Endothelial cell of umbilical vein (primary cell): ENCODE measurements at regions of chr13 and their contacts with region 1.

Region 1: DNA sequence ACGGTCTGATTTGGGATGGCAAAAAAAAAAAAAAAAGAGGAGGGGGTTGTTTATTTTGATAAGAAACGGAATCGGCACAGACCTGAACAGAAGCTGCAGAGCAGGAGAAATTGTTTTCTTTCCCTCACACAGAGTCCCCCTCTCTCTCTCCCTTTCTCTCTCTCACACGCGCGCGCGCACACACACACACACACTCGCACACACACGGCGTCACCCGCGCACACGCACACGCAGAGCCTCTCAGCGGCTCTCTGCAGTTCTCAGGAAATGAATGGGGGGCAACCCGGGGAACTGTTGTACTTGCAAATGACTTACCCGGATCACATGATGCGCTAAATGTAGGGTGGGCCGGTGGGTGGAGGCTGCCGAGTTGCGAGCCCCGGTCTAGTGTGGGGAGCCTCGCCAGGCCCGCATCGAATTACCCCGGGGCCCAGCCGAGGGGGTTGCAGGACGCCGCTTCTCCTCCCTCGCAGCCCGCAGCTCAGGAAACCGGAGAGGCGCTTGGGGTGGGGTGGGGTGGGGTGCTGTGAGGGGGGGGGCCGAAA is 475 bp downstream of the KLF12 start:
- DNase-seq: peak; percentile 90
- H3K4me3 ChIP-seq: peak overlapping the region; percentile 74 to 92 (median 91)
- H3K27ac ChIP-seq: peak overlapping the region; percentile 64
- H3K4me1 ChIP-seq: peaks cover 32% of the 10 kb centered on the region
- H3K27me3 ChIP-seq: no peaks in the 10 kb centered on the region
- CTCF ChIP-seq: no peak
- POLR2A ChIP-seq: no peak

Region 2: GRCh38 chr13:73835138-73835721 is 298.5 kb before region 1 on chr13:
- CTCF ChIA-PET with region 1: interaction called, 4 read pairs
- POLR2A ChIA-PET with region 1: no interaction called
- dilution Hi-C with region 1: no loop called
- intact Hi-C with region 1: loop called (anchors 2 kb)
- DNase-seq: peak; percentile 55
- H3K4me3 ChIP-seq: no peak overlapping the region
- H3K27ac ChIP-seq: no peak overlapping the region
- H3K4me1 ChIP-seq: peaks cover 4% of the 10 kb centered on the region
- H3K27me3 ChIP-seq: no peaks in the 10 kb centered on the region
- CTCF ChIP-seq: peak; percentile 27 to 37
- POLR2A ChIP-seq: no peak

Region 3: GRCh38 chr13:74070065-74070464 is 63.7 kb before region 1 on chr13:
- CTCF ChIA-PET with region 1: no interaction called
- POLR2A ChIA-PET with region 1: no interaction called
- dilution Hi-C with region 1: no loop called
- intact Hi-C with region 1: loop called (anchors 2 kb)
- DNase-seq: no peak
- H3K4me3 ChIP-seq: no peak overlapping the region
- H3K27ac ChIP-seq: no peak overlapping the region
- H3K4me1 ChIP-seq: peaks cover 21% of the 10 kb centered on the region
- H3K27me3 ChIP-seq: no peaks in the 10 kb centered on the region
- CTCF ChIP-seq: no peak
- POLR2A ChIP-seq: no peak

Region 4: DNA sequence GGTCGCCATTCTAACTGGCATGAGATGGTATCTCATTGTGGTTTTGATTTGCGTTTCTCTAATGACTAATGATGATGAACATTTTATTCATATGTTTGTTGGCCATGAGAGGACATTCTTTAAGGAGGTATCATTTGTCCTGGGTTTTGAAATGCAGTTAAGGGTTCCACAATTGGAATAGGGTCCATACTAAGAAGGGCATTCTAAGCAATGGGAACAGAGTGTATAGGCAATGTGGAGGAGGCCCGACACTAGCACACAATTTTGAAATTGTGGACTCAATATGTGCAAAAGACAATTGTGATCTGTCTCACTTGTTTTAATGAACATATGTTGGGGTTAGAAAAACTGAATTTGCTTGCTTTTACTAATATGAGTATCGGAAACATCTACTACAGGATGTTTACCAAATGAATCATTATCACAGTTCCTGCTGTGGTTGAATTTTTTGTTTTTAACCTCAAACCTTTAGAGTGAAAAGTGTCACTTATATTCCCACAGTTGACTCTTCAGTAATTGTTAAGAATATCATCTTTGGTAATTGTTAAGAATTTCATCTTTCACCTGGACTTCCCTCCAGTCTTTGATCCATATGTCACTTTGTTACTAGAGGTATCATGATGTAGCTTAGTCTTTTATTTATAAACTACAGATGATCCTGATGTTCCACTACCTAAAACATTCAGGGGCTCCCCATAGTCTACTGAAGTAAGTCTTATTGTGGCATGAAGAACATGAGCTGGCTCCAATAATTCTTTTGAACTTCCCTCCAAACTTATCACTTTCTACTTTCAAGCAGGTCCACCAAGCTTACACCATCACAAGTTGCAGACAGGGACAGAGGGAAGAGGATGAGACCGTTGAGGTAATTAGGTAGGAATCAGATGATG is 110.2 kb after region 1 on chr13:
- CTCF ChIA-PET with region 1: no interaction called
- POLR2A ChIA-PET with region 1: no interaction called
- dilution Hi-C with region 1: no loop called
- intact Hi-C with region 1: loop called (anchors 1 kb)
- DNase-seq: peak; percentile 59
- H3K4me3 ChIP-seq: no peak overlapping the region
- H3K27ac ChIP-seq: peak overlapping the region; percentile 77
- H3K4me1 ChIP-seq: peaks cover 13% of the 10 kb centered on the region
- H3K27me3 ChIP-seq: no peaks in the 10 kb centered on the region
- CTCF ChIP-seq: no peak
- POLR2A ChIP-seq: no peak

Region 5: GRCh38 chr13:74625541-74625940 is 491.8 kb after region 1 on chr13:
- CTCF ChIA-PET with region 1: no interaction called
- POLR2A ChIA-PET with region 1: no interaction called
- dilution Hi-C with region 1: no loop called
- intact Hi-C with region 1: no loop called
- DNase-seq: no peak
- H3K4me3 ChIP-seq: no peak overlapping the region
- H3K27ac ChIP-seq: no peak overlapping the region
- H3K4me1 ChIP-seq: no peaks in the 10 kb centered on the region
- H3K27me3 ChIP-seq: no peaks in the 10 kb centered on the region
- CTCF ChIP-seq: no peak
- POLR2A ChIP-seq: no peak

Region 6: GRCh38 chr13:74907788-74908187 is 774.1 kb after region 1 on chr13:
- CTCF ChIA-PET with region 1: no interaction called
- POLR2A ChIA-PET with region 1: no interaction called
- dilution Hi-C with region 1: no loop called
- intact Hi-C with region 1: loop called (anchors 10 kb)
- DNase-seq: peak; percentile 68
- H3K4me3 ChIP-seq: no peak overlapping the region
- H3K27ac ChIP-seq: peak overlapping the region; percentile 45
- H3K4me1 ChIP-seq: peaks cover 23% of the 10 kb centered on the region
- H3K27me3 ChIP-seq: no peaks in the 10 kb centered on the region
- CTCF ChIP-seq: no peak
- POLR2A ChIP-seq: no peak

Region 7: DNA sequence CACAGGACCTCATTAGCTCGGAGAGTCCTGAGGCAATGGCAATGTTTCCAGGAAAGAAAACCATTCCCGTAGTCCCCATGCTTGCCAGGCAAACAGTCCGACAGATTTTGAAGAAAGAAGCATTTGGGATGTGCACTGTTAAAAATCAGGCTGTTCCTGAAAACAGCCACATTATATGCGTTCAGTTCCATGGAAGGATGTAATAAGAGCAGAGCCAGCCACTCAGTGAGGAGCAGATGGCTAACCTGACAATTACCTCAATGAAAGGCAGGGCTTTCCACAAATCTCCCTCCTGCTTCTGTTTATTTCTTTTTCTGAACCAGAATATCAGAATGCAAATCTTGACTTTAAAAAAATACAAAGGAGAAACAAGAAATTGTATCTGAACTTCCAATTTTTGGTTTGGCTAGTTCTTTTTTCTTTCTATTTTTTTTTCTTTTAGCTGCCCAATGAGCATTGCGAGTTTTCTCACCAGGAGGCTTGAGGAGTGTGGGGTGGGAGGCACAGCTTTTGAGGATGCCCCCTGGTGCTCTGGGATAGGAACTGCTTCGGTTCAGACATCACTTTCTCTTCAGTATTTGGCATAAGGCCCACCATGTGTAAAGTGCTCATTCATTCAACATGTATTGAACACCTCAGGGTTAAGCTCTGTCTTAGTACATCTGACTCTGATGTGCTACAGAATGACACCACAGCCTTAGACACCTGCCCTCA is 1224.0 kb after region 1 on chr13:
- CTCF ChIA-PET with region 1: no interaction called
- POLR2A ChIA-PET with region 1: no interaction called
- dilution Hi-C with region 1: no loop called
- intact Hi-C with region 1: loop called (anchors 1 kb)
- DNase-seq: peak; percentile 78
- H3K4me3 ChIP-seq: no peak overlapping the region
- H3K27ac ChIP-seq: no peak overlapping the region
- H3K4me1 ChIP-seq: peaks cover 2% of the 10 kb centered on the region
- H3K27me3 ChIP-seq: no peaks in the 10 kb centered on the region
- CTCF ChIP-seq: peak; percentile 72 to 78
- POLR2A ChIP-seq: no peak